H1 (cell line): ENCODE measurements at regions of chr20 and their contacts with region 1.

Region 1: GRCh38 chr20:43456809-43457639 is 672 bp upstream of the SRSF6 start:
- DNase-seq: peak; percentile 81 to 86
- H3K4me3 ChIP-seq: peak overlapping the region; percentile 90 to 99 (median 96)
- H3K27ac ChIP-seq: peak overlapping the region; percentile 100
- H3K4me1 ChIP-seq: peaks cover 0 to 4% (median 0%) of the 10 kb centered on the region in 4 experiments; a peak in 2 of 7 replicates
- H3K27me3 ChIP-seq: no peaks in the 10 kb centered on the region
- CTCF ChIP-seq: no peak
- EP300 ChIP-seq: no peak
- POLR2A ChIP-seq: no peak
- RAD21 ChIP-seq: no peak

Region 2: DNA sequence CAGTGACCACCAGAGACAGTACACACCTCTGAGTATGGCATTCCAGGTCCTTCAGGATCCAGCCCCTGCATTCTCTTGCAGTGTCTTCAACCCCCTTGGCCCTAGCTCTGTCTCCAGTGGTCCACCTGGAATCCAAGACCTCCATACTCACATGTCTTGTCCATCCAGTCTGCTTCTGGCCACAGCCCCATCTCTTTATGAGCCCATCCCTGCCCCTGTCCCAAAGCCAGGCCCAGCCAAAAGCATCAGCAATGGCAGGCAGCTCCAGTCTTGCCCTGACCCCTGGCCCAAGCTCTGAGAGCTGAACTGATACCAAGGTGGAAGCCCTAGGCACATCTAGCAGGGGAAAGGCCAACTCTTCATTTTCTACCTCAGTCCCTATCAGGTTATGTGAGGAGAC is 147.8 kb before region 1 on chr20:
- CTCF ChIA-PET with region 1: no interaction called
- POLR2A ChIA-PET with region 1: no interaction called
- DNase-seq: no peak
- H3K4me3 ChIP-seq: no peak overlapping the region
- H3K27ac ChIP-seq: no peak overlapping the region
- H3K4me1 ChIP-seq: no peaks in the 10 kb centered on the region
- H3K27me3 ChIP-seq: no peaks in the 10 kb centered on the region
- CTCF ChIP-seq: no peak
- EP300 ChIP-seq: no peak
- POLR2A ChIP-seq: no peak
- RAD21 ChIP-seq: no peak

Region 3: GRCh38 chr20:43442282-43442880 is 14.6 kb before region 1 on chr20:
- CTCF ChIA-PET with region 1: interaction called, 11 read pairs
- POLR2A ChIA-PET with region 1: interaction called, 58 read pairs
- DNase-seq: no peak
- H3K4me3 ChIP-seq: no peak overlapping the region
- H3K27ac ChIP-seq: no peak overlapping the region
- H3K4me1 ChIP-seq: no peaks in the 10 kb centered on the region
- H3K27me3 ChIP-seq: no peaks in the 10 kb centered on the region; a peak in 1 of 7 replicates
- CTCF ChIP-seq: peak; percentile 6 to 41 (median 15); a peak in 2 of 4 replicates
- EP300 ChIP-seq: no peak
- POLR2A ChIP-seq: no peak
- RAD21 ChIP-seq: peak; percentile 42 to 44

Region 4: GRCh38 chr20:43492101-43492500 is 35.1 kb after region 1 on chr20:
- CTCF ChIA-PET with region 1: no interaction called
- POLR2A ChIA-PET with region 1: interaction called, 24 read pairs
- DNase-seq: no peak
- H3K4me3 ChIP-seq: no peak overlapping the region
- H3K27ac ChIP-seq: no peak overlapping the region
- H3K4me1 ChIP-seq: no peaks in the 10 kb centered on the region
- H3K27me3 ChIP-seq: no peaks in the 10 kb centered on the region
- CTCF ChIP-seq: no peak
- EP300 ChIP-seq: no peak
- POLR2A ChIP-seq: no peak
- RAD21 ChIP-seq: no peak

Region 5: GRCh38 chr20:43514062-43514999 is 57.3 kb after region 1 on chr20:
- CTCF ChIA-PET with region 1: interaction called, 5 read pairs
- POLR2A ChIA-PET with region 1: interaction called, 72 read pairs
- DNase-seq: peak; percentile 69 to 93
- H3K4me3 ChIP-seq: peak overlapping the region; percentile 49 to 71 (median 56)
- H3K27ac ChIP-seq: 0 out of 2 replicates have a peak overlapping the region, but pooled peaks have one; percentile 46
- H3K4me1 ChIP-seq: no peaks in the 10 kb centered on the region; a peak in 3 of 7 replicates
- H3K27me3 ChIP-seq: no peaks in the 10 kb centered on the region
- CTCF ChIP-seq: no peak
- EP300 ChIP-seq: no peak
- POLR2A ChIP-seq: peak in 1 of 2 experiments; percentile 57; a peak in 2 of 3 replicates
- RAD21 ChIP-seq: no peak

Region 6: GRCh38 chr20:43537921-43538877 is 81.2 kb after region 1 on chr20:
- CTCF ChIA-PET with region 1: interaction called, 3 read pairs
- POLR2A ChIA-PET with region 1: interaction called, 23 read pairs
- DNase-seq: peak in 1 of 2 experiments; percentile 86
- H3K4me3 ChIP-seq: no peak overlapping the region
- H3K27ac ChIP-seq: no peak overlapping the region
- H3K4me1 ChIP-seq: no peaks in the 10 kb centered on the region
- H3K27me3 ChIP-seq: no peaks in the 10 kb centered on the region
- CTCF ChIP-seq: peak; percentile 78 to 96 (median 81)
- EP300 ChIP-seq: no peak
- POLR2A ChIP-seq: no peak
- RAD21 ChIP-seq: peak; percentile 89 to 91